Naive thymus-derived CD8-positive, alpha-beta T cell (primary cell): ENCODE measurements at regions of chr11 and their contacts with region 1.

Region 1: GRCh38 chr11:93741094-93741881 is at the starts of genes C11orf54 and TAF1D:
- DNase-seq: peak; percentile 86 to 99 (median 97)
- ATAC-seq: peak; percentile 87 to 89
- H3K4me3 Mint-ChIP-seq: peak within 1 kb of the TSS; percentile 95 to 100 (median 100)
- H3K27ac Mint-ChIP-seq: peak within 1 kb of the TSS; percentile 99 to 100 (median 99)
- H3K4me1 Mint-ChIP-seq: peaks cover 23 to 73% (median 68%) of the 10 kb centered on the region in 4 donors
- H3K27me3 Mint-ChIP-seq: no peaks in the 10 kb centered on the region
- polyA plus RNA-seq, gene C11orf54: 18.7 to 21.6 (median 19.4) TPM
- polyA plus RNA-seq, gene TAF1D: 22.3 to 25.3 (median 22.4) TPM

Region 2: DNA sequence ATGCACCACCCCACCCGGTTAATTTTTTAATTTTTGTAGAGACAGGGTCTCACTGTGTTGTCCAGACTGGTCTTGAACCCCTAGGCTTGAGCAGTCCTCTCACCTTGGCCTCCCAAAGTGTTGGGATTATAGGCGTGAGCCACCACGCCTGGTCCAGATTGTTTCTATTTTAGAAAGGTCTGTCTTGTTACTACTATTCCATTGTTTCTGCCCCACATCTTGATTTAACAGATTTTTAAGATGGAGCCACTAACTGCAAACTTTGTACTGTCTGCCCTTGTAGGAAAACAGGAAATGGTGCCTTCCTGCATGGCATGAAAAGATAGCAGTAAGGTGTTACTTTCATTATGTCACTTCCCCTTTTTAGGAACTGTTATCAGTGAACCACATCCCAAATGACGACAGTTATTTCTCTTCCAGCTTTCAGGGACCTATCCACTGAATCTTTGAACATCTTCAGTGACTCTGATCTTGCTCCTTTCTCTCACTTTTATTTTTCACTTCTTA is 23.2 kb before region 1 on chr11:
- POLR2A ChIA-PET with region 1: interaction called, 31 read pairs
- DNase-seq: no peak
- ATAC-seq: peak; percentile 37 to 44
- H3K4me3 Mint-ChIP-seq: peak overlapping the region in 8 of 10 donors; percentile 37 to 64 (median 48)
- H3K27ac Mint-ChIP-seq: peak overlapping the region; percentile 49 to 87 (median 82)
- H3K4me1 Mint-ChIP-seq: peaks cover 14 to 30% (median 20%) of the 10 kb centered on the region in 4 donors
- H3K27me3 Mint-ChIP-seq: no peaks in the 10 kb centered on the region

Region 3: DNA sequence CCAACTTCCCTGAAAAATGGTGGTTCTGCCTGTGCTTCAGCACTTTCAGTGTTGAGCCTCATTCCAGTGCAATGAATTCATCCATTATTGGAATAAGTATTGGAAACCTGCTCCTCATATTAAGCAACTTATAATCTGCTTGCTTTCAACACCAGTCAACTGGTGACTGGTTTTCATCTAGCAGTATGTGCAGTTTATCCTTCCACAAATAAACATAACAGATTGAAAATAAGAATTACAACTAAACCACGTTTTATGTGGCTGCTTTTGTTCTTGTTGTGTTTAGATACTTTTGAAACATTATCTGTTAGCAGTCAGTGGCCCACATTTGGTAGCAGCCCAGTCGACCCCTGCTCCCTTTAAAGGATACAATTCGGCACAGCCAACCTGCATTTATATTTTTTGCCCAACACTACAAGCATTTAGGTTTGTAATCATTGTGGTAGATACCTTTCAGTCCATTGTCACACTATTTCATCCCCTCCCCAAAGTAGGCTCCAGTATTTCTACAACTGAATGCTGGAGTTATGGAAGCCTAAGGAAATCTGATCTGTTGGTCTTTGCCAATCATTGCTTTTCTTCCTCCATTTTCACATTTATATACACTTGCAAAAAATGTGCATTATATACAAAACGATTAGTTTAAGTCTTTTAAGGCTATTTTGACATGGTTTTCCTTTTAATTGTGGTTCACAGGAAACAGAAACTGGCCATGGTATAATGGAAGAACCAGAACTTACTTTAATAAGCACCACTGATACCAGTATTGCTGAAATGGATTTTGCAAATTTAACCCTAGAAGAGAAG is 13.1 kb before region 1 on chr11:
- POLR2A ChIA-PET with region 1: interaction called, 31 read pairs
- DNase-seq: no peak
- ATAC-seq: peak in 1 of 2 donors; percentile 28
- H3K4me3 Mint-ChIP-seq: no peak overlapping the region
- H3K27ac Mint-ChIP-seq: peak overlapping the region; percentile 11 to 68 (median 38)
- H3K4me1 Mint-ChIP-seq: peaks cover 2 to 11% (median 6%) of the 10 kb centered on the region in 4 donors
- H3K27me3 Mint-ChIP-seq: no peaks in the 10 kb centered on the region

Region 4: GRCh38 chr11:93784152-93784934 is 43.1 kb after region 1 on chr11 and contains the start of gene MED17:
- POLR2A ChIA-PET with region 1: interaction called, 118 read pairs
- DNase-seq: peak; percentile 72 to 92 (median 84)
- ATAC-seq: peak; percentile 95
- H3K4me3 Mint-ChIP-seq: peak within 1 kb of the TSS; percentile 85 to 100 (median 99)
- H3K27ac Mint-ChIP-seq: peak within 1 kb of the TSS; percentile 90 to 99 (median 96)
- H3K4me1 Mint-ChIP-seq: peaks cover 21 to 52% (median 42%) of the 10 kb centered on the region in 4 donors
- H3K27me3 Mint-ChIP-seq: no peaks in the 10 kb centered on the region
- polyA plus RNA-seq, gene MED17: 7.7 to 20.0 (median 17.1) TPM

Region 5: GRCh38 chr11:93993747-93994146 is 252.5 kb after region 1 on chr11:
- POLR2A ChIA-PET with region 1: no interaction called
- DNase-seq: no peak
- ATAC-seq: no peak
- H3K4me3 Mint-ChIP-seq: no peak overlapping the region
- H3K27ac Mint-ChIP-seq: no peak overlapping the region
- H3K4me1 Mint-ChIP-seq: no peaks in the 10 kb centered on the region
- H3K27me3 Mint-ChIP-seq: peaks cover 0 to 8% (median 5%) of the 10 kb centered on the region in 5 donors